Activated B cell treated with CpG ODN at 0.5 μM for 24 hours (primary cell): ENCODE measurements at regions of chr11 and their contacts with region 1.

Region 1: GRCh38 chr11:35391922-35392813 is 27.2 kb downstream of the SLC1A2 start:
- DNase-seq: peak; percentile 79
- ATAC-seq: peak; percentile 75
- H3K4me3 Mint-ChIP-seq: peak overlapping the region; percentile 47
- H3K27ac Mint-ChIP-seq: no peak overlapping the region
- H3K4me1 Mint-ChIP-seq: peaks cover 25% of the 10 kb centered on the region
- H3K27me3 Mint-ChIP-seq: peaks cover 5% of the 10 kb centered on the region
- CTCF ChIP-seq: peak; percentile 84

Region 2: GRCh38 chr11:34492806-34493414 is 899.3 kb before region 1 on chr11:
- CTCF ChIA-PET with region 1: no interaction called
- POLR2A ChIA-PET with region 1: no interaction called
- intact Hi-C with region 1: loop called (anchors 5 kb)
- DNase-seq: no peak
- ATAC-seq: no peak
- H3K4me3 Mint-ChIP-seq: no peak overlapping the region
- H3K27ac Mint-ChIP-seq: no peak overlapping the region
- H3K4me1 Mint-ChIP-seq: no peaks in the 10 kb centered on the region
- H3K27me3 Mint-ChIP-seq: peaks cover 5% of the 10 kb centered on the region
- CTCF ChIP-seq: peak; percentile 65

Region 3: DNA sequence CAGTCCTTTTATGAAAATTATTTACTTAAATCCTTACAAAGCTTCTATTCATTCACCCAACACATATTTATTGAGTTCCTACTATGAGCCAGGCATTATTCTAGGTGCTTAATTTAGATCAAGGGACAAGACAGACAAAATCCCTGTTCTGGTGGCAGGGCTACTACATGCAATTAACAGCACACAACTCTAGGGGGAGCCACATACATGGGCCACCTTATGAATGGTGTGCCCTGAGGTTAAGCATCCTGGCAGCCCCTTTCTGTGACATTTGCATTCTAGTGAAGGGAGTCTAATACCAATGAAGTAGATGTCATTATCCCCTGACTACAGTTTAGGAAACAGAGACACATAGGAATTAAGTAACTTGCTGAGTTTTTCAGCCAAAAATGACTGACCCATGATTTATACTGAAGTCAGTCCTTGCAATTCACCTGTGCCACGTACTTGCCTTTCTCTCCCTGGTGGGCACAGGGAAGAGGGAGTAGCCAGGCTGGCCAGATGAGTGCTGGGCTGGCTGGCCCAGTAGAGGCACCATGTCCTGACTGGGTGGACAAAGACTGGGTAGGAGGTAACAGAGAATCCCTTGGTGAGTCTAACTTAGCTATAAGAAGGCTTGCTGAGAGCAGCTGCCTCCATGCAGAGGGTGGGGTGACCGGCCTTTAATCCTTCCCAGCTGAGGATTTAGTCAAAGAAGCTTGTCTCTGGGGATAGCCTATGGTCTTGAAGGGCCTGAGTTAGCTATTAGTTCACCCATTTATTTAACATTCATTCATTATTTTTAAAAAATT is 826.6 kb before region 1 on chr11:
- CTCF ChIA-PET with region 1: interaction called, 4 read pairs
- POLR2A ChIA-PET with region 1: no interaction called
- intact Hi-C with region 1: loop called (anchors 5 kb)
- DNase-seq: no peak
- ATAC-seq: peak; percentile 71
- H3K4me3 Mint-ChIP-seq: no peak overlapping the region
- H3K27ac Mint-ChIP-seq: no peak overlapping the region
- H3K4me1 Mint-ChIP-seq: no peaks in the 10 kb centered on the region
- H3K27me3 Mint-ChIP-seq: peaks cover 27% of the 10 kb centered on the region
- CTCF ChIP-seq: no peak

Region 4: GRCh38 chr11:34926101-34926830 is 465.9 kb before region 1 on chr11:
- CTCF ChIA-PET with region 1: interaction called, 105 read pairs
- POLR2A ChIA-PET with region 1: interaction called, 4 read pairs
- intact Hi-C with region 1: loop called (anchors 1 kb)
- DNase-seq: no peak
- ATAC-seq: peak; percentile 50
- H3K4me3 Mint-ChIP-seq: no peak overlapping the region
- H3K27ac Mint-ChIP-seq: no peak overlapping the region
- H3K4me1 Mint-ChIP-seq: peaks cover 8% of the 10 kb centered on the region
- H3K27me3 Mint-ChIP-seq: no peaks in the 10 kb centered on the region
- CTCF ChIP-seq: peak; percentile 63

Region 5: DNA sequence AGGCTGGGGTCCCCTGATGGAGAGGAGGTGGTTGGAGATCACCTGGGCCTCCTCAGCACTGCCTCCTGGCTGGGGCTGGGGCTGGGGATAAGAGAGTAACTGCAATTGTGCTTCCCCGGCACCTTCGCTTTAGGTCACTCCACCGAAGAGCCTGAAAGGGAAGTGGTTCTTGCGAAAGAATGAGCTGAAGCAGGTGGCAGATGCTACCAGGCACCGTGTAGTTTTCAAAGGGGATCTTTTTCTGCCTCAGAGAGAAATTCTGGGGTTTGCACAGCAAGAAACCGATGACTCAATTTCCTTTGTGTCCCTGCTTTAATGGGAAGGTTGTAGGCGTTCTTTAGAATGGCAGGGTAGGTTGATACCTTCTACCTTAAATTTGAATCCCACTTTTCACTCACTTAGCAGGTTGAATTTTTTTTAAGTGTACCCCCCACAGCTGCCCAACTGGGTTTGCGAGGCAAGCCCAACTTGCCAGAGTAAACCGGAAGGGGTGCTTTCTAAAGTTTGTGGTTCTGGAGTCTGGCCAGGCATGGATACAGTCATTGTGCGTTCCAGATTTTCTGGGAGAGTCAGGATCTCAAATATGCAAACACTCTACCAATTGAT is 247.9 kb before region 1 on chr11:
- CTCF ChIA-PET with region 1: no interaction called
- POLR2A ChIA-PET with region 1: interaction called, 3 read pairs
- intact Hi-C with region 1: loop called (anchors 5 kb)
- DNase-seq: peak; percentile 63
- ATAC-seq: peak; percentile 62
- H3K4me3 Mint-ChIP-seq: peak overlapping the region; percentile 97
- H3K27ac Mint-ChIP-seq: peak overlapping the region; percentile 90
- H3K4me1 Mint-ChIP-seq: peaks cover 81% of the 10 kb centered on the region
- H3K27me3 Mint-ChIP-seq: no peaks in the 10 kb centered on the region
- CTCF ChIP-seq: no peak

Region 6: DNA sequence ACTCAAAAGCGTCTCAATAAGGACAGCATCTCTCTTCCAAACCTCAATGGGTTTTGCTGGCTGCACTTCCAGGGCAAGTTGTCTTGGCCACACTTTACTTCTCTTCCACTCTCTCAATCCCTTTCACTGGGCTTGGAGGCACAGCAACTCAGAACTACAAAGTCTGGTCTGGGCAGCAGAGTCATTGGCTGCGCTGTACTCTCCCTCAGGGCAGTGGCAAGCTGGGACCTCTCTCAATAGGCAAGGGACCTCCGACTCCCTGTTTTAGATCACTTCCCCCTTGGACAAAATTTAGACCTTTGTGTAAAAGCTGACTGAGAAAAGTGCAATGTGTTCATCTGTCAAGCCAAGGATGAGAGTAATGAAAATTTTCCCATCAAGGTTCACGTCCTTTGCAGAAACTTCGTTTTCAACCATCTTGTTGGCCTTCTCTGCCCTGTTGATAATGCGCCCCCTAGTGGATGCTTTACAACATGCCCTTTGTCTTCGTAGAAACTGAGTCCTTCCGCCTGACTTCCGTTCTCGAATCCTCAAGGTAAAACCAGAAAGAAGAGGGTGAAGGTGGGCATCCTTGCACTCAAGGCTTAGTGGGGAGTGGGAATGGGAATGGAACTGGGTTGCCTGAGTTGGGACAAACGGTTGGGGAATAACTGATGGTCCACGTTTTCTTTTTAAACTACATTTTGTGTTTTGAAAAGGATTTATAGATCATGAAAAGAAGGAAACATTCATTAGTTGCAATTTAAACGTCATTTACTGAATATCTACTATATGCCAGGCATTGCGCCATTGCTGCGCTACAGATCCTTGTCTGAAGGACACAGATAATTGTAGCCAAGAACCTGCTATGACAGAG is 154.1 kb before region 1 on chr11:
- CTCF ChIA-PET with region 1: interaction called, 4 read pairs
- POLR2A ChIA-PET with region 1: no interaction called
- intact Hi-C with region 1: loop called (anchors 1 kb)
- DNase-seq: no peak
- ATAC-seq: peak; percentile 51
- H3K4me3 Mint-ChIP-seq: no peak overlapping the region
- H3K27ac Mint-ChIP-seq: no peak overlapping the region
- H3K4me1 Mint-ChIP-seq: peaks cover 30% of the 10 kb centered on the region
- H3K27me3 Mint-ChIP-seq: no peaks in the 10 kb centered on the region
- CTCF ChIP-seq: no peak